Left ventricle myocardium inferior (tissue), 1 donor: ENCODE measurements at regions of chr7 and their contacts with region 1.

Region 1: GRCh38 chr7:136517971-136518370 is 350.5 kb upstream of the CHRM2 start:
- DNase-seq: no peak
- H3K4me3 ChIP-seq: no peak overlapping the region
- H3K27ac ChIP-seq: no peak overlapping the region
- H3K4me1 ChIP-seq: no peaks in the 10 kb centered on the region
- H3K27me3 ChIP-seq: no peaks in the 10 kb centered on the region
- CTCF ChIP-seq: no peak

Region 2: DNA sequence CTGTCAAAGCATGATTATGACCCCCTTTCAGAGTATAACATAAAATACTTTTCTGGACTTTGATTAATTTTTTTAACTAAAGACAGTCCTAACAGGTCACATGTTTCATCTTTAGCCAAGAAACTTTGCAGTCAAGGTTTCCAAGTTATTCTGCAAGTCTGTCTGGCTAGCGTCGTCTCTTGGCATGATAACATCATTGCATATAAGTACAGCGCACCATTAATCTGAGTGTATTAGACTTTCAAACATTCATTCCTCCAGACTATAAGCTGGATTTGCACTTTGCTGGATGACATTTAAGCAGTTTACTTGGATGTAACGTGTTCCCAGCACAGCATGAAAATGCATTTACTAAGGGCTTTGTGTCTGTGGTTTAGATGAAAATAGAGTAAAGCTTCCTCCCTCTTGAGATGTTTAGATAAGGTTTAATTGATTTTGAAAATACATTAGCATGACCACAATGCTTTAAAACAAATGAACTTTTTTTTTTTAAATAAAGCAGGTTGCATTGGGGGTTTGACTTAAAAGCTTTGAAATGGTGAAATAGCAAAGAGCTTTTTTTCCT is 191.8 kb before region 1 on chr7:
- intact Hi-C with region 1: loop called (anchors 10 kb)
- DNase-seq: no peak
- H3K4me3 ChIP-seq: no peak overlapping the region
- H3K27ac ChIP-seq: no peak overlapping the region
- H3K4me1 ChIP-seq: no peaks in the 10 kb centered on the region
- H3K27me3 ChIP-seq: peaks cover 4% of the 10 kb centered on the region
- CTCF ChIP-seq: no peak